ENCODE measurements at regions of chr1 and their contacts with region 1.

Region 1: GRCh38 chr1:9128520-9129265 is at the start of gene GPR157:
- DNase-seq: peak; percentile 53 to 82 (median 70)
- ATAC-seq: peak; percentile 95
- H3K4me3 ChIP-seq: peak within 1 kb of the TSS; percentile 67
- H3K4me3 Mint-ChIP-seq: peak within 1 kb of the TSS; percentile 85 to 95 (median 90)
- H3K27ac ChIP-seq: peak within 1 kb of the TSS; percentile 67
- H3K27ac Mint-ChIP-seq: peak within 1 kb of the TSS; percentile 59 to 94 (median 87)
- H3K4me1 ChIP-seq: peaks cover 8 to 24% of the 10 kb centered on the region in 2 donors
- H3K4me1 Mint-ChIP-seq: peaks cover 19 to 40% (median 32%) of the 10 kb centered on the region in 7 donors
- H3K27me3 ChIP-seq: no peaks in the 10 kb centered on the region
- H3K27me3 Mint-ChIP-seq: peaks cover 0 to 25% (median 0%) of the 10 kb centered on the region in 5 donors
- total RNA-seq, gene GPR157: 4.0 to 14.1 (median 5.9) TPM

Region 2: DNA sequence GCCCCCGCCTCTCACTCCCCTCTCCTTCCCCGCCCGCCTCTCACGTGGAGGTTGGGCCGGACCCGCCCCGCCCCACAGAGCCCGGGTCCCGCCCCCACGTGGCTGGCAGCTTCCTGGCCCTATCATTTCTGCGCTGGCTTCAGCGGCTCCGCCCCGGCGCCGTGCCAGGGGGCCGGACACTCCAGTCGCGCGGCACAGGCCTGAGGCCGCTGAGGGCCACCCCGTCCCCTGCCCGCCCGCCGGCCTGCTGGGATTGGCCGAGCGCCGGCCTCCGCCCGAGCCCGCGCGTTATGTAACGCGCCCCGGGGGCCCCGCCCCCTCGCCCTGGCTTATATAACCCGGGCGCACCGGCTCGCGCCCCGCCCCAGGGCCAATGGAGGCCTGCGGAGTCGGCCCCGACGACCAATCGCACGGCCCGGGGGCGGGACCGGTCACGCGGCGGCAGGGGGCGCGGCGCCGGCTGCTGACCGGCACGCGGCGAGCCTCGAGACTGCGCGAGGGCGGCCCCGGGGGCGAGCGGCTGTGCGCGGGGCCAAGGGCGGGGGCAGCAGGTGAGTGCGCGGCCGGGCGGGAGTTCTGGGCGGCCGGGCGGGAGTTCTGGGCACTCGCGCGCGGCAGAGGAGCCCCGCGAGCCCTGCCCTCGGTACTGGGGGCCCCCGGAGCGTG is 1344.7 kb before region 1 on chr1 and contains the start of gene PER3:
- CTCF ChIA-PET with region 1: no interaction called
- POLR2A ChIA-PET with region 1: no interaction called
- intact Hi-C with region 1: loop called in 1 of 2 experiments (anchors 10 kb)
- DNase-seq: peak; percentile 84 to 97 (median 94)
- ATAC-seq: peak; percentile 93
- H3K4me3 ChIP-seq: peak within 1 kb of the TSS; percentile 58
- H3K4me3 Mint-ChIP-seq: peak within 1 kb of the TSS; percentile 67 to 85 (median 76)
- H3K27ac ChIP-seq: peak within 1 kb of the TSS; percentile 99
- H3K27ac Mint-ChIP-seq: peak within 1 kb of the TSS in 8 of 9 donors; percentile 63 to 91 (median 82)
- H3K4me1 ChIP-seq: peaks cover 8 to 17% of the 10 kb centered on the region in 2 donors
- H3K4me1 Mint-ChIP-seq: peaks cover 18 to 39% (median 28%) of the 10 kb centered on the region in 7 donors
- H3K27me3 ChIP-seq: no peaks in the 10 kb centered on the region
- H3K27me3 Mint-ChIP-seq: peaks cover 0 to 16% (median 0%) of the 10 kb centered on the region in 5 donors
- total RNA-seq, gene PER3: 2.2 to 10.4 (median 5.1) TPM

Region 3: DNA sequence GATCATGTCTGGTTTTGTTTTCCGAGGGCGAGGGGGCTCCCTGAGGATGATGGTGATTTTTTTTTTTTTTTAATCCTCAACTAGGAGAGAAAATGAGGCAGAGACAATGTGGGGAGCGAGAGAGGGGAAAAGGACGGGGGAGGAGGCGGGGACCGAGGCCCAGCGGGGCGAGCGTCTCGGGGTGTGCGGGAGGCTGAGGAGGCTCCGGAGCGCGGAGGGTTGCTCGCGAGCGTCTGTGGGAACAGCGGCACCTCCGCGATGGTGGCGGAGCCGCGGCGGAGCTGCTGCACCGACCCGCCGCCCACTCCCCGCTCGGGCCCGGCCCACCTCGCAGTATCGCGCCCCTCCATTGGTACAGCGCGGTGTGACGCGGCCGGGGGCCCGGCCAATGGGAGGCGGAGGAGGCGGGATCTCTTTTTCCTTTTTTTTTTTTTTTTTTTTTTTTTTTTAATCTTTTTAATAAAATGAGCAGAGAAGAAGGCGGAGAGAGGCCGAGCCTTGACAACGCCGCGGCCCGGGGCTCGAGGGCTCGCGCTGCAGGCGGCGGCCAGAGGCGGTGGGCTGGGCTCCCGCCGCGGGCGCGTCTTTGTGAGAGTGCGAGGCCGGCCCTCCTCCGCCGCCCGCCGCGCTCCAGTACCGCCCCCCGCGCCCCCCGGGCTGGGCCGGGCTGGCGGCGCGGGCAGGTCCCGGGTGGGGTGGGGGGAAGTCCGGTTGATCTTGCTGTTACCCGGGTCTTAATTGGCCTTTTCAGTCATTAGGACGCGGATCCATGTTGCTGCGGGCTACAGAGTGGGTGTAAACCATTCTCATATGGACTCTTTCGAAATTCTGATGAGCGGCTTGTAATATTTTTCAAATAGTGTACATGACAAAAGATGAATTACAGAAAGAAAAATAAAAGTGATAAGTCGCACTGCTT is 311.0 kb before region 1 on chr1 and contains the start of gene RERE:
- CTCF ChIA-PET with region 1: no interaction called
- POLR2A ChIA-PET with region 1: interaction called, 3 read pairs
- intact Hi-C with region 1: loop called in 1 of 2 experiments (anchors 2 kb)
- DNase-seq: peak; percentile 92 to 100 (median 99)
- ATAC-seq: peak; percentile 99
- H3K4me3 ChIP-seq: peak within 1 kb of the TSS; percentile 96
- H3K4me3 Mint-ChIP-seq: peak within 1 kb of the TSS; percentile 84 to 99 (median 92)
- H3K27ac ChIP-seq: peak within 1 kb of the TSS; percentile 96
- H3K27ac Mint-ChIP-seq: peak within 1 kb of the TSS; percentile 83 to 99 (median 95)
- H3K4me1 ChIP-seq: peaks cover 10 to 15% of the 10 kb centered on the region in 2 donors
- H3K4me1 Mint-ChIP-seq: peaks cover 26 to 46% (median 41%) of the 10 kb centered on the region in 7 donors
- H3K27me3 ChIP-seq: no peaks in the 10 kb centered on the region
- H3K27me3 Mint-ChIP-seq: peaks cover 0 to 23% (median 0%) of the 10 kb centered on the region in 5 donors
- total RNA-seq, gene RERE: 75.6 to 114 (median 107) TPM

Region 4: GRCh38 chr1:9181176-9181906 is 52.6 kb after region 1 on chr1:
- CTCF ChIA-PET with region 1: no interaction called
- POLR2A ChIA-PET with region 1: no interaction called
- intact Hi-C with region 1: loop called (anchors 5 kb)
- DNase-seq: peak; percentile 34 to 89 (median 64)
- ATAC-seq: peak; percentile 71
- H3K4me3 ChIP-seq: peak overlapping the region; percentile 11
- H3K4me3 Mint-ChIP-seq: peak overlapping the region; percentile 69 to 96 (median 81)
- H3K27ac ChIP-seq: no peak overlapping the region
- H3K27ac Mint-ChIP-seq: peak overlapping the region in 1 of 9 donors; percentile 93
- H3K4me1 ChIP-seq: peaks cover 5% of the 10 kb centered on the region in 2 donors
- H3K4me1 Mint-ChIP-seq: peaks cover 0 to 25% (median 7%) of the 10 kb centered on the region in 7 donors
- H3K27me3 ChIP-seq: no peaks in the 10 kb centered on the region
- H3K27me3 Mint-ChIP-seq: peaks cover 11 to 31% (median 17%) of the 10 kb centered on the region in 5 donors

Region 5: DNA sequence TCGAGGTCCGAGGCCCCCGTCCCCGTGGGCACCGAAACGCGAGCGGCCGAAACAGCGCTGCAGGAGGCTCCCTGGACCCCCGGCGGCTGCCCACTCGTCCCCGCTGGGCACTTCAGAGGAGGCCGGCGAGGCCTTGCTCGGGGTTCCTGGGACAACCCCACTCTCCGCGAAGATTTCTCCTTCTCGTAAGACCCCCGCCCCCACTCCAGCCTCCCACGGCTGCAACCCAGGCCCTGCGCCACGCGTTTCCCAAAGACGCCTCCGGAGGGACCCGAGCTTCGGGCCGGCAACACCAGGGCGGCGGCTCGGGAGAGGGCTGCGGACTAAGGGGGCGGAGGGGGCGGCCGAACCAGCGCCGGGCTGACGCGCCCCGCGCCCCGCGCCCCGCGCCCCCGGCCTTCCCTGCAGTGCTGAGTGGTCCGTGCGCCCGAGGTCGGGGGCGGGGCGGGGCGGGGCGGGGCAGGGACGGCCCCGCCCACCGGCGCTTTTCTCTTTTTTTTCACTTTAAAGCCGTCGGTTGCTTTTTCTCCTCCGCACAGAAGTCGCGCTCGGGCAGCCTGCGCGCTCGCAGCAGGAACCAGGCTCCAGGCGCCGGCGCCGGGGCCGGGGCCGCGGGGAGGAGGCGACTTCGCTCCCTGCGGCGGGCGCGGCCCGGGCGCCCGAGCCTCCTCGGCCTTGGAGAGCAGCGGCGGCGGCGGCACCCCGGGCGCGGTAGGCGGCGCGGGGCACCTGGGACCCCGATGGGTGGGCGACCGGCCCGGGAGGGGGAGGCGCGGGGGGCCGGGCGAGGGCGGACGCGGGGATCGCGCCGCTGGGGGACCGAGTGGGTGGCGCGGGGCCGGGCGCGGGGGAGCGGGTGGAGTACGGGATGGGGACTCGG is 163.9 kb after region 1 on chr1 and contains the start of gene SPSB1:
- CTCF ChIA-PET with region 1: interaction called, 3 read pairs
- POLR2A ChIA-PET with region 1: interaction called, 3 read pairs
- intact Hi-C with region 1: loop called in 1 of 2 experiments (anchors 1 kb)
- DNase-seq: peak; percentile 30 to 66 (median 56)
- ATAC-seq: peak; percentile 81
- H3K4me3 ChIP-seq: peak within 1 kb of the TSS; percentile 55
- H3K4me3 Mint-ChIP-seq: peak within 1 kb of the TSS; percentile 34 to 86 (median 66)
- H3K27ac ChIP-seq: peak within 1 kb of the TSS; percentile 27
- H3K27ac Mint-ChIP-seq: peak within 1 kb of the TSS in 8 of 9 donors; percentile 21 to 81 (median 52)
- H3K4me1 ChIP-seq: peaks cover 6 to 19% of the 10 kb centered on the region in 2 donors
- H3K4me1 Mint-ChIP-seq: peaks cover 6 to 40% (median 32%) of the 10 kb centered on the region in 7 donors
- H3K27me3 ChIP-seq: no peaks in the 10 kb centered on the region
- H3K27me3 Mint-ChIP-seq: no peaks in the 10 kb centered on the region
- total RNA-seq, gene SPSB1: 1.8 to 10.3 (median 1.9) TPM

Measured in naive thymus-derived CD4-positive, alpha-beta T cell (primary cell).